H1 (cell line): ENCODE measurements at regions of chr10 and their contacts with region 1.

Region 1: GRCh38 chr10:30534465-30535144 is 94.9 kb downstream of the LYZL2 start:
- DNase-seq: peak in 1 of 2 experiments; percentile 76
- H3K4me3 ChIP-seq: no peak overlapping the region
- H3K27ac ChIP-seq: no peak overlapping the region
- H3K4me1 ChIP-seq: peaks cover 0 to 9% (median under 1%) of the 10 kb centered on the region in 4 experiments; a peak in 2 of 7 replicates
- H3K27me3 ChIP-seq: no peaks in the 10 kb centered on the region
- CTCF ChIP-seq: peak; percentile 63 to 84 (median 71)
- EP300 ChIP-seq: no peak
- POLR2A ChIP-seq: no peak
- RAD21 ChIP-seq: peak; percentile 87 to 88

Region 2: DNA sequence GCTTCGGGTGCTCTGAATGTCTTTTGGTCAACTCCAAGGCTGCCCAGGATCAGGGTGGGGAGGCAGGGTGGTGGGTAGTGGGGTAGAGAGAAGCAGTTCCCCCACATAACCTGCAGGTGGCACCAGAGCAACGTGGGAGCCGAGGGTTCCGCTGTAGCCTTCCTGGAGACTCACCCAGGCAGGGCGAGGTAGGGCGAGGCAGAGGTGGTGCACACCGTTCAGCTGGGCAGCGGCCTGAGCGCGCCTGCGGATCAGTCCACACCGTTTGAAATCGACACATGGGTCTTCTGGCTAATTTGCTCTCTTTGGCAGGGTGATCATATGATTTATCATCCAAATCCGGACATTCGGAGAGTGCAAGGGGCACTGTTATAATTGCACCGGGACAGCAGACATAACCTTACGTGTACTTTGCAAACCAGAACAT is 142.0 kb before region 1 on chr10:
- CTCF ChIA-PET with region 1: interaction called, 23 read pairs
- POLR2A ChIA-PET with region 1: no interaction called
- DNase-seq: peak; percentile 47 to 93
- H3K4me3 ChIP-seq: no peak overlapping the region
- H3K27ac ChIP-seq: no peak overlapping the region
- H3K4me1 ChIP-seq: peaks cover 0 to 2% (median 0%) of the 10 kb centered on the region in 4 experiments; a peak in 2 of 7 replicates
- H3K27me3 ChIP-seq: no peaks in the 10 kb centered on the region
- CTCF ChIP-seq: peak; percentile 93 to 98 (median 93)
- EP300 ChIP-seq: no peak
- POLR2A ChIP-seq: no peak
- RAD21 ChIP-seq: peak; percentile 97 to 98

Region 3: GRCh38 chr10:30413996-30414576 is 120.5 kb before region 1 on chr10:
- CTCF ChIA-PET with region 1: interaction called, 12 read pairs
- POLR2A ChIA-PET with region 1: no interaction called
- DNase-seq: no peak
- H3K4me3 ChIP-seq: no peak overlapping the region
- H3K27ac ChIP-seq: no peak overlapping the region
- H3K4me1 ChIP-seq: no peaks in the 10 kb centered on the region
- H3K27me3 ChIP-seq: no peaks in the 10 kb centered on the region
- CTCF ChIP-seq: peak in 2 of 3 experiments; percentile 59 to 79; a peak in 2 of 4 replicates
- EP300 ChIP-seq: no peak
- POLR2A ChIP-seq: no peak
- RAD21 ChIP-seq: peak; percentile 74 to 76

Region 4: GRCh38 chr10:30647089-30647488 is 112.5 kb after region 1 on chr10:
- CTCF ChIA-PET with region 1: no interaction called
- POLR2A ChIA-PET with region 1: no interaction called
- DNase-seq: peak in 1 of 2 experiments; percentile 11
- H3K4me3 ChIP-seq: no peak overlapping the region
- H3K27ac ChIP-seq: no peak overlapping the region
- H3K4me1 ChIP-seq: peaks cover 0 to 7% (median 3%) of the 10 kb centered on the region in 4 experiments; a peak in 3 of 7 replicates
- H3K27me3 ChIP-seq: no peaks in the 10 kb centered on the region
- CTCF ChIP-seq: no peak
- EP300 ChIP-seq: no peak
- POLR2A ChIP-seq: no peak
- RAD21 ChIP-seq: no peak